Colonic mucosa (tissue), 4 donors: ENCODE measurements at regions of chr9 and their contacts with region 1.

Region 1: DNA sequence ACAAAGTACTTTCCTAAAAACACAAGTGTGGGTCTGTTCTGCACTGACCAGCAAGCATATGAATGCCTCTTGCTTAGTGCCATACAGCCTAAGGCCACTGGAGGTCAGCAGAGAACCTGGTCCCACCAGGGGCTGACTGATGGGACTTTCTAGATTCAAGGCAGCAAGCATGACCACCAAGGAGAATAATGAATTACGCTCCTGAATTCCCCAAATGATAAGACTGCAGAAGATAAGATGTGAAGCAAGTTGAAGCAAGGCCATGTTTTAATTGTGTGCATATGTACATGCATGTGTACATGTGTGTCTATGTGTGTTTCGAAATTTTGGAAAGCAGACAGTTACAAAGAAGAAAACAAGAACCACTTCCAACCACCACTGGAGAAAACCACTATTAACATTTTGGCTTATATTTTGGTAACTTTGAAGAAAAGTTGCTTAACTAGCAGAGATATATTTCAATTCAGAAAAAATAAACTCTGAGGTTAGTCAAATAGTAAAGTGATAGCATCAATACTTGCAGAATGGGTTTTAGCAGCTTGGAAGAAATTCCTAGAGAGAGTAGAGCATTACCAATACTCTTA is 70.5 kb downstream of the ERP44 start:
- DNase-seq: peak; percentile 72
- H3K4me3 ChIP-seq: no peak overlapping the region
- H3K27ac ChIP-seq: no peak overlapping the region
- H3K4me1 ChIP-seq: no peaks in the 10 kb centered on the region
- H3K27me3 ChIP-seq: no peaks in the 10 kb centered on the region
- CTCF ChIP-seq: peak; percentile 93

Region 2: GRCh38 chr9:99931157-99931840 is 97.0 kb before region 1 on chr9:
- intact Hi-C with region 1: no loop called
- DNase-seq: no peak
- H3K4me3 ChIP-seq: no peak overlapping the region
- H3K27ac ChIP-seq: no peak overlapping the region
- H3K4me1 ChIP-seq: no peaks in the 10 kb centered on the region
- H3K27me3 ChIP-seq: no peaks in the 10 kb centered on the region
- CTCF ChIP-seq: no peak

Region 3: GRCh38 chr9:100216178-100216787 is 188.0 kb after region 1 on chr9:
- intact Hi-C with region 1: loop called (anchors 5 kb)
- DNase-seq: peak; percentile 76
- H3K4me3 ChIP-seq: no peak overlapping the region
- H3K27ac ChIP-seq: no peak overlapping the region
- H3K4me1 ChIP-seq: no peaks in the 10 kb centered on the region
- H3K27me3 ChIP-seq: no peaks in the 10 kb centered on the region
- CTCF ChIP-seq: peak; percentile 62